Stomach (tissue), 19 donors: ENCODE measurements at regions of chr5 and their contacts with region 1.

Region 1: GRCh38 chr5:17204133-17204489 is 13.3 kb upstream of the BASP1 start:
- DNase-seq: no peak
- H3K4me3 ChIP-seq: no peak overlapping the region
- H3K27ac ChIP-seq: no peak overlapping the region
- H3K4me1 ChIP-seq: no peaks in the 10 kb centered on the region
- H3K27me3 ChIP-seq: peaks cover 0 to 15% (median 0%) of the 10 kb centered on the region in 3 donors
- CTCF ChIP-seq: no peak
- EP300 ChIP-seq: no peak
- POLR2A ChIP-seq: no peak

Region 2: DNA sequence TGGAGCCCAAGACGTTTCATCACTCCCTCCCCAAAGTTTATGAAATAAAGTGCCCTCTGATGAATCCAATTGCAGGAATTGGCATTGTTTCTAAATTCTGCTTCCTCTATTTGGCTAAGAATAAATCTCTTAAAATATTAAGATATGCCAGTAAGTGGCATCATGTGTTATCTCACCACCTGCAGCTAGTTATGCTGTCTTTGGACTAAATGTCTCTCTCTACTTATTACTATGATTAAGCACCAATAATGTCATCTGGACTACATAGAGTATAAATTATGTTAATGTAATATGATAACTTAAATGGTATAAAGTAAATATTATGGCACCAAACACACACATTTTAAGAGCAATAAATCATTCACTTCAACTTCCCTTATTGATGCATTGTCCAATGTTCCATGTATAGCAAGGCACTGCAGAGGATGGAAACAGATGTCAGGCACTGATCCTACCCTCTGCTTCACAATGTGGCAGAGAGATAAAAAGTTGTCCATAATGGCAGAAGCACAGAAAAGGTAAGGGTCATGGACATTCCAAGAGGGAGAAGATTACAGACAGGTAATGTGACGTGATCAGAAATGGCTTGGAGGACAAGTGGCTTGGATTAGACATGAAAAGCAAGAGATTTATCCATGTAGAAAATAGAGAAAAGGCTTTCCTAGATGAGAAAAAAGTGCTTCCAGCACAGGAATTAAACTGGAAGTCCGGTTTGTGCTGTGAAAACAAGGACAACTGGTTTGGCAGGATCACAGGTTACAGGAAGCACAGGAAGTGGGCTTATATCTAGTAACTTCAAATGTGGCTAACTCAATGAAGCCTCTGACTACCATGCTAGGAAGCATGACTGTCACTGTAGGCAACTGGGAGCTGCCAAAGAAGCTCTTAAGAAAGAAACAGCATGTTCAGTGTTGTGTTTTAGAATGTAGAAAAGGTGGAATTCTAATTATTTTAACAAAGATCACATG is 1051.2 kb before region 1 on chr5:
- intact Hi-C with region 1: loop called (anchors 10 kb)
- DNase-seq: no peak
- H3K4me3 ChIP-seq: no peak overlapping the region
- H3K27ac ChIP-seq: no peak overlapping the region
- H3K4me1 ChIP-seq: no peaks in the 10 kb centered on the region
- H3K27me3 ChIP-seq: no peaks in the 10 kb centered on the region
- CTCF ChIP-seq: no peak
- EP300 ChIP-seq: no peak
- POLR2A ChIP-seq: no peak